Calu3 (cell line): ENCODE measurements at regions of chr14 and their contacts with region 1.

Region 1: DNA sequence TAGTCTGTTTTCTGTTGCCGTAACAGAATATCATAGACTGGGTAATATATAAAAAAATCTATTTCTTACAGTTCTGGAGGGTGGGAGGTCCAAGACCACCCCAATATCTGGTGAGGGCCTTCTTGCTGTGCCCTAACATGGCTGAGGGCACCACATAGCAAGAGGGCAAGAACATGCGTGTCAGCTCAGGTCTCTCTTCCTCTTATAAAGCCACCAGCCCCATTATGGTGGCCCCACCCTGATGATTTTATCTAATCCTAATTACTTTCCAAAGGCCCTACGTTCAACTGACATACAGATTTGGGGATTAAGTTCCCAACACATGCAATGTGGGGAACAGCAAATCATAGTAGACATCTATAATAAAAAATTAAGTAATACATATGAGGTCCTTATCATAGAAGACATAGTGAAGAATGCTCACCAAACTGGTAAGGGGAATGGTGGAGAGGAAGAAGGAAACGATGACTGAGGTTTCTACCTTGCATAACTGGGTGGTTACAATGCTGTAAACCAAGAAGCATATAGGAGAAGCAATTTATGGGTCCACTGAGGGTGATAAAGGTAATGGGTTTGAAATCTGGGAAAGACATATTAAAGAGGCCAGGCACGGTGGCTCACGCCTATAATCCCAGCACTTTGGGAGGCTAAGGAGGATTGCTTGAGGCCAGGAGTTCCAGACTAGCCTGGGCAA is 27.0 kb downstream of the BTBD7 start:
- DNase-seq: no peak
- H3K4me3 Mint-ChIP-seq: no peak overlapping the region
- H3K27ac Mint-ChIP-seq: no peak overlapping the region
- H3K4me1 Mint-ChIP-seq: peaks cover 30% of the 10 kb centered on the region
- H3K27me3 Mint-ChIP-seq: no peaks in the 10 kb centered on the region
- CTCF ChIP-seq: no peak

Region 2: DNA sequence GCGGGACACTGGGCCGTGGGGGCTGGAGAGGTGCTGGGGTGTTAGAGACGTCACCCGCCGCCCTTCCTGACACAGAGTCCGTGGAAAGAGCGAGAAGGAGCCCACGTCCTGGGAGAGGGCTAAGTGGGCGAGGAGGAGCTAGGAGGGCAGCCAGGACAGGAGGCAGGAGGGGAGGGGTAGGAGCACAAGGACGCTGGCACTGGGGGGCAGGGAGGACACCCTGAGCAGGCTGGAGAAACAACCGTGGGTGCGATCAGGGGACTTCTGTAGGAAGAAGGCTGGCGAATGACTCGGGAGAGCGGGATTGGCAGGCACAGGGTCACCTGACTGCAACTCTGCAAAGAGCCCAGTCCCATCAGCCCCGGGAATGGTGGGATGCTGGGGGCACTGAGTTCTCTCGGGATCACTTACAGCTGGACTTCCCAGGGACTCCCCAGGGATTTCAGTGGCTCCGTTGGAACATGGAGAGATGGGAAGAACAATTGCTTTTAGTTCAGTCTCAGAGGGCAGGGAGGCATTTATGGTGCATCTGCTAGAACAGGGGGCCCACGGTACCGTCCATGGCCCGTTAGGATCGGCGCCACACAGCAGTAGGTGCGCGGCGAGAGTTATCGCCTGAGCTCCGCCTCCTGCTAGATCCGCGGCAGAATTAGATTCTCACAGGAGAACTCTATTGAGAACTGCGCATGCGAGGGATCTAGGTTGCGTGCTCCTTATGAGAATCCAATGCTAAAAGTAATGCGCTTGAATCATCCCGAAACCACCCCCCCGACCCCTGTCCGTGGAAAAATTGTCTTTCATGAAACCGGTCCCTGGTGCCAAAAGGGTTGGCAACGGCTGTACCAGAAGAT is 74.5 kb before region 1 on chr14:
- CTCF ChIA-PET with region 1: no interaction called
- intact Hi-C with region 1: no loop called
- DNase-seq: peak; percentile 45
- H3K4me3 Mint-ChIP-seq: peak overlapping the region; percentile 82
- H3K27ac Mint-ChIP-seq: peak overlapping the region; percentile 37
- H3K4me1 Mint-ChIP-seq: peaks cover 21% of the 10 kb centered on the region
- H3K27me3 Mint-ChIP-seq: no peaks in the 10 kb centered on the region
- CTCF ChIP-seq: no peak

Region 3: GRCh38 chr14:93319958-93320357 is 14.1 kb after region 1 on chr14:
- CTCF ChIA-PET with region 1: no interaction called
- intact Hi-C with region 1: loop called (anchors 2 kb)
- DNase-seq: no peak
- H3K4me3 Mint-ChIP-seq: no peak overlapping the region
- H3K27ac Mint-ChIP-seq: no peak overlapping the region
- H3K4me1 Mint-ChIP-seq: peaks cover 49% of the 10 kb centered on the region
- H3K27me3 Mint-ChIP-seq: no peaks in the 10 kb centered on the region
- CTCF ChIP-seq: no peak